ENCODE measurements at regions of chr16 and their contacts with region 1.

Region 1: DNA sequence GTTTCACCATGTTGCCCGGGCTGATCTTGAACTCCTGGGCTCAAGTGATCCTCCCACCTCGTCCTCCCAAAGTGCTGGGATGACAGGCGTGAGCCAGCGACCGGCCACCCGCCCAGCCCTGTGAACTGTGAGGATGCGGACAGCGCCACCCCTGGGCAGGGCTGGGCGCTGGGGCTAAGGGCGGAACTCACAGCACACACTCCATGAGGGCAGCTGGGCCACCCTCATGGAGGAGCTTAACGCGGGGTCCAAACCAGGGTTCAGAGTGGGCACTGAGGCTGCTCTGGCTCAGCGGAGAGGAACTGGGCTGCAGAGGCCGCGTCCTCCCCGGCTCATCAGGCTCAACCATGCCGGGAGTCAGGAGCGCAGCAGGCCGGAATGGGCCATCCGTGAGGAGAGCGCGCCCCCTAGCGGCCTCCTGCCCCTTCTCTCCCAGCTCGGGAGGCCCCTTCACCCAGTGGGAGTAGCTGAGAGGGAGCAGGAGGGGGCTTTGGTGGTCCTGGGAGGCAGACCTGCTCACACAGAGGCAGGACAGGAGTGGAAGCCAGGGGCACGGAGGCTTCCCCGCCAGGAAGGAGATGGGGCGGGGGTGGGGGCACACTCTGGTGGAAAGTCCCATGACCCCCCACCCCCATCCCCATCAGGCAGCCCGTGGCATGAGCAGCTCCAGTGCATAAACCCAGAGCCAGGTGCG is 13.8 kb downstream of the CORO7 start:
- DNase-seq: peak; percentile 67
- H3K4me3 Mint-ChIP-seq: no peak overlapping the region
- H3K27ac Mint-ChIP-seq: no peak overlapping the region
- H3K4me1 Mint-ChIP-seq: peaks cover 5% of the 10 kb centered on the region
- H3K27me3 Mint-ChIP-seq: no peaks in the 10 kb centered on the region

Region 2: DNA sequence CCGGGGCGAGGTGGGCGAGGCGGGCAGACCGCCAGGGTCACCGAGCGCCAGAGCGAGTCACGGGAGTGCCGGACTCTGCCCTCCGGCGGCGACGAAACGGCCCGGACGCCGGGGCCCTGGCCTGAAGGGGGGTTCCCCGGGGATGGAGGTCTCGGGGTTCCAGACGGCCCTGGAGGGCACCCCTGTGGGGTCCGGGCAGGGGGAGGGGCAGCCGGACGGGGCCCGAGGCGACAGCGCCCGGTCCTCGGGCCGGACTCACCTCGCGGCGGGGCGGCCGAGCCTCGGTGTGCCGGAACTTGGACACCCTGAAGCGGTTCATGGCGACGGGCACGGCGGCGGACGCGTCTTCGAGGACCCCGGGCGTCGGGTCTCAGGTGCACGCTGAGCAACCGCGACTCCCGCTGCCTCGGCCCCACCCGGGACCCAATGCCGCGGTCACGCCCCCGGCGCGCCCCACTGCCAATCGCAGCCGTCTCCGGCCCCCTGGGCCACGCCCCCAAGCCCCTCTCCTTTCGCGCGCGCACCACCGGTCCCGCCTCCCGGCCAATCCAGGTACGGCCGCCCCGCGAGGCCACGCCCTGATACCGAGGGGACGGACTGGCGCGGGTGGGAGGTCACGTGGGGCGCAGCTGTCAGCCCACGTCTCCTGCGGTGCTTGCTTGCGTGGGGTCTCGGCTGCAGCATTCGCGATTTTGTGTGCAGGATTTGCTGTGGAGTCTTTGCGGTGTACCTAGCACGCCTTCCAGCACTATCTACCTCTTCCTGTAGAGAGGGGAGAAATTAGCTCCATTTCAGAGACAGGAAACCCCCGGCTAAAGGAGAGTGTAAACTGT is 13.8 kb after region 1 on chr16 and contains the start of gene CORO7:
- CTCF ChIA-PET with region 1: interaction called, 24 read pairs
- POLR2A ChIA-PET with region 1: no interaction called
- DNase-seq: peak; percentile 98
- H3K4me3 Mint-ChIP-seq: peak within 1 kb of the TSS; percentile 89
- H3K27ac Mint-ChIP-seq: peak within 1 kb of the TSS; percentile 92
- H3K4me1 Mint-ChIP-seq: peaks cover 33% of the 10 kb centered on the region
- H3K27me3 Mint-ChIP-seq: peaks cover 3% of the 10 kb centered on the region
- total RNA-seq, gene CORO7: 196 to 211 TPM

Region 3: DNA sequence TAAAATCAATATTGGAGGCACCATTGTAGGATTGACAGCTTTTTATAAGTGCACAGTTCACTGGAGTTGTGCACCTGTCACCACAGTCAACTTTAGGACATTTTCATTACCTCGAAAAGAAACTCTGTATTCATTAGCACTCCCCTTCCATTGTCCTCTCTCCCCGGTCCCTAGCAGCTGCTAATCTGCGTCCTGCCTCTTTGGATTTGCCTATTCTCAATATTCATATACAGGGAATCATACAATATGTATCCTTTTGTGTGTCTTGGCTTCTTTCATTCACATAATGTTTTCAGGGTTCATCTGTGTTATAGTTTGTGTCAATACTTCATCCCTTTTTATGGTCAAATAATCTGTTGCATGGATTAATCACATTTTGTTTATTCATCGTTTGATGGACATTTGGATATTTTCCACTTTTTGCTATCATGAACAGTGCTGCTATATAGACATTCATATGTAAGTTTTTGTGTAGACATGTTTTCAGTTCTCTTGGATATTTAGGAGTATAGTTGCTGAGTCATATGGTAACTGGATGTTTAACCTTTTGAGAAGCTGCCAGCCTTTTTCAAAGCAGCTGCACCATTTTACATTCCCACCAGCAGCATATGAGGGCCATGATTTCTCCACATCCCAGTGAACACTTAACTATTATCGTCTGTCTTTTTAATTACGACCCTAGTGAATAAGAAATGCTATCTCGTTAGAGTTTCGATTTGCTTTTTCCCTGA is 32.9 kb after region 1 on chr16:
- CTCF ChIA-PET with region 1: no interaction called
- POLR2A ChIA-PET with region 1: no interaction called
- DNase-seq: no peak
- H3K4me3 Mint-ChIP-seq: no peak overlapping the region
- H3K27ac Mint-ChIP-seq: peak overlapping the region; percentile 25
- H3K4me1 Mint-ChIP-seq: peaks cover 19% of the 10 kb centered on the region
- H3K27me3 Mint-ChIP-seq: no peaks in the 10 kb centered on the region

Measured in activated CD4-positive, alpha-beta T cell treated with anti-CD3 and anti-CD28 coated beads, Interleukin-2, amount 10 ng/mL, durations not matched to agents 7 days and 5 days (primary cell).